ENCODE measurements at regions of chr10 and their contacts with region 1.

Region 1: DNA sequence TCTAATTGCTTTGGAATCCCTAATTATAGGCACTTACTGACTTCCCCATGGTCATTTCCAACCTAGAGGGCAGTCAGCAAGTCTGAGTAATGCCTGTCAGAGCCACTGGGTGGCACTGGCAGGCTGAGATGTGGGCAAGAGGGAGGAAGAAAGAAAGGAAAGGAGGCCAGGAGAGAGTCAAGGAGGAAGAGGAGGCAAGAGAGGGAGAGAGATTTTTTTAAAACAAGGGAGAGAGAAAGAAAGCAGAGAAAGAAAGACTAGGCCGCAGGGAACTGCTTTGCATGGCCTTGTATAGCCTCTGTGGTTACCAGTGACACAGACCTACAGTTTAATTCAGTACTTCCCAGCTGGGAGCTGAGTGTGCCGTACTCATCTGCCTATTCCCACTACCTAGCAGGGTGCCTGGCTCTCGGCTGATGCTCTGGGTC is 210.4 kb upstream of the ADO start:
- DNase-seq: peak; percentile 51
- H3K4me3 ChIP-seq: no peak overlapping the region
- H3K27ac ChIP-seq: no peak overlapping the region
- H3K4me1 ChIP-seq: peaks cover 4% of the 10 kb centered on the region
- H3K27me3 ChIP-seq: no peaks in the 10 kb centered on the region
- CTCF ChIP-seq: peak; percentile 92 to 96

Region 2: DNA sequence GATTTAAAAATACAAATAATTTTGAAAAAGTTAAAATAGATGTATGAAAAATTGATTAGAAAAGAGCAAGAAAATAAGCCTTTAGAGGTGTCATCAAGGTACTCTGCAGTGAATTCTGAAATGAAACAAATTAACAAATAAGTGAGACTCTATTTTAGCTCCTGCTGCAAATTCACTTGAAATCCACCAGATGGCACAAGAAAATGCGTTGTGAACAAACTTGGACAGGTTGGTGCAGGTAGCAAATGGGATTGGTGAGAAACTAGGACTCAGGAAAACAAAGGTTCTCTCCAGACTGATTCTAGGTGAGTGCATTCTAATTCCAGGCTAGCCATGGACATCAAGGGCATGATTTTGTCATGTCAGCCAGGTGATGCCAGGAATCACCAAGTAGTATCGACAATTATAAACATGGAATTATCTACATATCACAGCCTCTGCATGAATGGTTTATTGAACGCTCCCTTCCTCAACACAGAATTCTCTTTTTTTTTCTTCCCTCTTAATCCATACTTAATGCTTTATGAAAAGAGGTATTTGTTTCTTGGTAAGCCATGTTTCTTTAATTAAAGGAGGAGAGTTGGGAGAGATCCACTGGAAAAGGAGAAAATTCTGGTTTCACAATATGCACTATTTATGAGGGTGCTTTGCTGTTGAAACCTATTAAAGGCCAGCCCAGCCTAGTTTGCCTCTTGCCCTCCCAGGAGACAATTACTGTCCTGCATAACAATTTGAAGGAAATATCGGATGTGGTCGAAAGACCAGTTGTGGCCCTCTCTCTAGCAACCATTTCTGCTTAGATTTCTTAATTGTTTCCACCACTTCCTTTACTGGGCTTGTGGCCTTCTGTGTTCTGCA is 101.9 kb before region 1 on chr10:
- CTCF ChIA-PET with region 1: interaction called, 3 read pairs
- dilution Hi-C with region 1: no loop called
- in situ Hi-C with region 1: no loop called
- intact Hi-C with region 1: loop called (anchors 5 kb)
- DNase-seq: peak; percentile 72
- H3K4me3 ChIP-seq: no peak overlapping the region
- H3K27ac ChIP-seq: peak overlapping the region; percentile 55
- H3K4me1 ChIP-seq: peaks cover 10% of the 10 kb centered on the region
- H3K27me3 ChIP-seq: no peaks in the 10 kb centered on the region
- CTCF ChIP-seq: peak; percentile 80 to 87

Region 3: GRCh38 chr10:62554632-62555199 is 39.4 kb before region 1 on chr10:
- CTCF ChIA-PET with region 1: no interaction called
- dilution Hi-C with region 1: no loop called
- in situ Hi-C with region 1: no loop called
- intact Hi-C with region 1: loop called (anchors 1 kb)
- DNase-seq: peak; percentile 54
- H3K4me3 ChIP-seq: no peak overlapping the region
- H3K27ac ChIP-seq: no peak overlapping the region
- H3K4me1 ChIP-seq: peaks cover under 1% of the 10 kb centered on the region
- H3K27me3 ChIP-seq: no peaks in the 10 kb centered on the region
- CTCF ChIP-seq: peak; percentile 57 to 77

Measured in mammary epithelial cell (primary cell).